ENCODE measurements at regions of chr9 and their contacts with region 1.

Region 1: DNA sequence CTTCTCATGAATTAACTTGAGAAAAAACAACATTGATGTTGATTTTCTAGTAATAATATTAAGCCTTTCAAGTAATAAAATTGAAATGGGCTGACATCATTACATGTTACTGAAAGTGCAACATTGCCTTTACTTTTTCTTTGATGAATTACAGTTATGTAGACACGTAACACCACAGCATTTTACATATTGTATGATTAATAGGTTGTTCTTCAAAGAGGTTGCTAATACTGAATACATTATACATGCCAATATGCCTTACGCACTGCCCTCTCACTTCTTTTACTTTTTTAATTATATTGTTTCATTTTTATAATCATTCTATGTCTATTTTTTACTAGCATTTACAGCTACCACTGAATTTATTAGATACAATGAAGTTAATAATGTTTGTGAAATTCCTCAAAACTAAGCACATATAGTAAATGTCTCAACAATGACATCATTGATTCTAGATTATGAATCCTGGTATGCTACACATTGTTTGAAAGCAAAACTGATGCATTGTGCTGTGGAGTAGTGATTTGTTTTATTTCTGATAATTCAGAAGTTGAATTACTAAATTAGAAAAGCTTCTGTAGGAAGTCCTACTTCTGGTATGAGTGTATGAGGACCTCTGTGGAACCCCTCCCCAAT is 464.4 kb upstream of the IZUMO3 start:
- DNase-seq: no peak
- ATAC-seq: no peak
- H3K4me3 ChIP-seq: no peak overlapping the region
- H3K27ac ChIP-seq: no peak overlapping the region
- H3K4me1 ChIP-seq: no peaks in the 10 kb centered on the region
- H3K27me3 ChIP-seq: no peaks in the 10 kb centered on the region
- CTCF ChIP-seq: no peak

Region 2: DNA sequence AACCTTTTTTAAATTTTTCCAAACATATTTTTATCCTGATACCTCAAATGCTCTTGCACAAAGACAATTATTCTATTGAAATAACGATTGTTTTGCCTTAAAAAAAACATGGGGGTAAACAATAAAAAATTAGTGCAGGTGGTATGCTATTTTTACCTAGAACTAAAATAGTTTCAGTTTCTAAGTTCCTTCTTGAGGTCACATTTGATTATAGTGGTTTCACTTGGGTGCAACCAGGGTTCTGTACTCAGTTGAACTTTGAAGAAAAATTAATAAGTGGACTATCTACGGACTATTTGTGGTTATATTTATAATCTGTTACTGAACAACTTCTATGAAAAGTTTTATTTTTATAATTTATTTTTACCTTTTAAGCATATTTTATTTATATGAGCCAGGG is 77.4 kb before region 1 on chr9:
- intact Hi-C with region 1: loop called in 1 of 10 experiments (anchors 10 kb)
- DNase-seq: no peak
- ATAC-seq: no peak
- H3K4me3 ChIP-seq: no peak overlapping the region
- H3K27ac ChIP-seq: no peak overlapping the region
- H3K4me1 ChIP-seq: no peaks in the 10 kb centered on the region
- H3K27me3 ChIP-seq: no peaks in the 10 kb centered on the region
- CTCF ChIP-seq: no peak